Motor neuron (in vitro differentiated cells): ENCODE measurements at regions of chr2 and their contacts with region 1.

Region 1: GRCh38 chr2:21042958-21043743 is 722 bp downstream of the APOB start:
- ATAC-seq: peak; percentile 30 to 74 (median 64)
- H3K4me3 ChIP-seq: no peak overlapping the region
- H3K27ac ChIP-seq: no peak overlapping the region
- H3K4me1 ChIP-seq: peaks cover 7 to 10% of the 10 kb centered on the region in 2 donors

Region 2: GRCh38 chr2:20852139-20852538 is 191.0 kb before region 1 on chr2:
- in situ Hi-C with region 1: no loop called
- ATAC-seq: no peak
- H3K4me3 ChIP-seq: no peak overlapping the region
- H3K27ac ChIP-seq: no peak overlapping the region
- H3K4me1 ChIP-seq: no peaks in the 10 kb centered on the region

Region 3: DNA sequence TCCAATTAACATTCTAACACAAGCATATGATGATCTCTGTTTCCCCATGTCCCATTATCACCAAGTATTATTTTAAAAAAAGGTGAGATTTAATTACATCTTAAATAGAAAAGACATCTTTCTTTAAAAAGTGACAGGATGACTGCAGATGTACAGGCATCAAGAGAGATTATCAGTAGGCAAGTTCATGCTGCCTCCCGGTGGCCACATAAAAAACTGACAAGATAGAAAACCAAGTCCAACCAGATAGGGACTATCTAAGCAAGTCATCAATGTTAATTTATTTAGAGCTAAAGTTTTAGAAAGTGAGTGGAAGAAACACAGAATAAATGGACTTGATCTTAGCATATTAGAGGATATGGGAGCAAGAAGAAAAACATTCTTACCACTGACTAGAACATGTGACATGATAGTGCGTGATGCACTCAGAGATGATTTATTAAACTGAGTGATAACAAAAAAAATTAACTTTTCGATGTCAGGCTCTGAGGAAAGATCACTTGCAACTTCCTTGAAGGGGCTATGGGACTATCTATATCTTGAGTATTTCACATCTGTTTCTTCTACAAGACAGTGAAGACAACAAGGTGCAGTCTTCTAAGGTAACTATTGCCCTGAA is 75.3 kb after region 1 on chr2:
- in situ Hi-C with region 1: loop called in 1 of 9 experiments (anchors 10 kb)
- ATAC-seq: peak in 4 of 8 experiments; percentile 48 to 89 (median 76)
- H3K4me3 ChIP-seq: no peak overlapping the region
- H3K27ac ChIP-seq: no peak overlapping the region
- H3K4me1 ChIP-seq: no peaks in the 10 kb centered on the region

Region 4: DNA sequence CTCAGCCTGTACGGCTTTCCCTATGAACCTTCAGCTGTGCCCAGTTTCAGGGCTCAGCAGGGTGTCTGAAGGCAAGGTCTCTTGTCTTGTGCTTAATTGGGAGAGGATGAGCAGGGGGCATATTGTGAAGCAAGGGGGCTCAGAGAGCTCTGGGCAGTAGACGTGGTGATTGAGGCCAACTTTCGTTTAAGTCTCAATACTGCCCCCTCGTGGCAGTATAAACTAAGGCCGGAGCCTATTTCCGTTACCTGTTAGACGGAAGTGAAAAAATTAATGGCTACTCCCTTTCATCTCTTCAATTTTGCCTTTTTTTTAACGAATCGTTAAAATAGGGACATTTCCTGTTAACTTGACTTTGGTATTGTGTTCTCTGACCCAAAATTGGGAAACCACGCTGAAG is 274.0 kb after region 1 on chr2:
- in situ Hi-C with region 1: loop called in 1 of 9 experiments (anchors 25 kb)
- ATAC-seq: peak in 2 of 8 experiments; percentile 17 to 56
- H3K4me3 ChIP-seq: no peak overlapping the region
- H3K27ac ChIP-seq: no peak overlapping the region
- H3K4me1 ChIP-seq: peaks cover 3 to 7% of the 10 kb centered on the region in 2 donors